ENCODE measurements at regions of chr2 and their contacts with region 1.

Region 1: DNA sequence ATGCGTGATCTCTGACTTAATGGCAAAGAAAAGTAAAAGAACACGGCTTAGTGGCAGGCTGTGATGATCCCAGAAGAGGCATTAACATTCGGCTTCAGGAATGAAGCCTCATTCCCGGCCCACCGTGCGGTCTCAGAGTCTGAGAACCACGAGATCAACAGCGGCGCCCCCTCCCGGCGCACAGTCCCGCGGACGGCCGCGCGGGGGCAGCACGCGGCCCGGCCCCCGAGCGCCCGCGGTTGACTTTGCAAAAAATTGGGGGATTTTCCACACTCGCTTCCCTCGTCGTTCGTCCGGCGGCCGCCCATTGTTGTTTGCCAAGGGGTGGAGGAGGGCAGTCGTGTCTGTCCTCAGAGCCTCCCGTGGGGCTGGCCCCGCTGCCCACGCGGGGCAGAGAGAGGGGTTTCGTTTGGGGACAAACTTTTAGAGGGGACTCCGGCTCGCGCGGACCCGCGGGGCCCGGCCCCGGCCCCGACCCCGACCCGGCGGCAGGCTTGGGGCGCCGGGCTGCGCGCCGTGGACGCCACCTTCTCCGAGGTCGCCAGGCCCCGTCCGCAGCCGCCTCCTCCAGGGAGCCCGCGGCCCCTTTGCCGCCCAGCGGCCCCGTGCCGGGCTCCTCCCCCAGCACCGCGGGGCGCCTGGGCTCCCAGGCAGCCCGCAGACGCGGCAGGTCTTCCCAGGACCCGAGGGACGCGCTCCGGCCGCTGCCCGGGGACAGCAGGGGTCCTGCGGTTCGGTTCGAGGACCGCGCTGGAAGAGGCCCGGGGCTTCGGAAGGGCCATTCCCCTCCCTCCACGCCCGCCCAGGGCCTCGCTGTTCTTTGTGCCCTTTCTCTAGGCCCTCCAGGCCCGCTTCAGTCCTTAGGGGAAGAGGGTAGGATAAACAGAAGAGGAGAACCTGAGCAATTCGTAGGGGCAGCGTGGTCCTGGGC is 3.4 kb upstream of the HS6ST1 start:
- DNase-seq: peak; percentile 54 to 91 (median 74)
- ATAC-seq: peak; percentile 65
- H3K4me3 ChIP-seq: peak overlapping the region; percentile 54
- H3K4me3 Mint-ChIP-seq: peak overlapping the region; percentile 87
- H3K27ac ChIP-seq: no peak overlapping the region
- H3K27ac Mint-ChIP-seq: peak overlapping the region; percentile 42
- H3K4me1 ChIP-seq: peaks cover 25% of the 10 kb centered on the region
- H3K4me1 Mint-ChIP-seq: peaks cover 22% of the 10 kb centered on the region
- H3K27me3 ChIP-seq: no peaks in the 10 kb centered on the region
- H3K27me3 Mint-ChIP-seq: no peaks in the 10 kb centered on the region
- CTCF ChIP-seq: peak; percentile 89

Region 2: GRCh38 chr2:126657636-126658318 is 1664.3 kb before region 1 on chr2:
- CTCF ChIA-PET with region 1: no interaction called
- POLR2A ChIA-PET with region 1: no interaction called
- intact Hi-C with region 1: loop called in 1 of 2 experiments (anchors 10 kb)
- DNase-seq: peak; percentile 50 to 90 (median 74)
- ATAC-seq: peak; percentile 59
- H3K4me3 ChIP-seq: peak overlapping the region; percentile 86
- H3K4me3 Mint-ChIP-seq: peak overlapping the region; percentile 100
- H3K27ac ChIP-seq: peak overlapping the region; percentile 80 to 81
- H3K27ac Mint-ChIP-seq: peak overlapping the region; percentile 98
- H3K4me1 ChIP-seq: peaks cover 66% of the 10 kb centered on the region
- H3K4me1 Mint-ChIP-seq: peaks cover 78% of the 10 kb centered on the region
- H3K27me3 ChIP-seq: no peaks in the 10 kb centered on the region
- H3K27me3 Mint-ChIP-seq: no peaks in the 10 kb centered on the region
- CTCF ChIP-seq: no peak

Region 3: DNA sequence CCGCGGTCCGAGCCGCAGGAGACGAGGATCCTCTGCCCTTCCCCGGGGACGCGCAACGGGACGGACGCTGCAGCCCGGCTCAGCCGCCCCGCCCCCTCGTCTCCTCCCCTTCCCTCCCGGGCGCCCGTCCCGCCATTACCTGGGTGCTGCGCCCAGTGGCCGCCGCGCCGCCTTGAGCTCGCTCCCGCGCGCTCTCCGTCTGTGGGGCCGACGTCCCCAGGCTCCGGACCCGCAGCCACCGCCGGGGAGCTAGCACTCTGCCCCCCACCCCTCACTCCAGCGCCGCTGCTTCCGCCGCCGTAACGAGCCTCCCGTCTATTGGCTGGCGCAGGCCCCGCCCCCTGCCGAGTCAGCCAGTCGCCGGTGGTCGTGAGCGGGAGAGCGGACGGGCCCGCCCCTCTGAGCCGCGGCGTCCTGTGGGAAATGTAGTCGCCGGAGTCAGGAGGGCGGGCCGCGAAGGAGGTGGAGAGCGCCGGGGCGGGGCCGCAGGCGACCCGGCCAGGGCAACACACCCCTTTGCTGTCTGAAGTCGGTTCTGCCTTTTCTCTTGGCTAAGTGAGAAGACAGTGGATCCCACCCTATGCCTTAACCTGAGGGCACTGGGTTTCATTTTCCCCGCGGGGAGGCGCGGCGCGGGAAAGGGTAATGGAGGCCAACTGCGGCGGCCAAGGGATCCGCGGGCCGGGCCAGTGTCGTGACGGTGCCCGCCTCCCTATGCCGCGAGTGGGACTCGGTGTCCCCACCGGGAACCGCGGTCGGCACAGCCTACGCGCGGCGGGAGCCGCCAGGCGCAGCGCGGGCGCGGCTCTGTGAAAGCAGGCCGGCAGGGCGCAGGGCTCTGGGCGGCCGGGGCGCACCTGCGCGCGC is 294.0 kb before region 1 on chr2 and contains the start of gene SAP130:
- CTCF ChIA-PET with region 1: no interaction called
- POLR2A ChIA-PET with region 1: no interaction called
- intact Hi-C with region 1: loop called in 1 of 2 experiments (anchors 5 kb)
- DNase-seq: peak; percentile 96 to 99 (median 98)
- ATAC-seq: peak; percentile 76
- H3K4me3 ChIP-seq: peak within 1 kb of the TSS; percentile 77
- H3K4me3 Mint-ChIP-seq: peak within 1 kb of the TSS; percentile 99
- H3K27ac ChIP-seq: peak within 1 kb of the TSS; percentile 85 to 89
- H3K27ac Mint-ChIP-seq: peak within 1 kb of the TSS; percentile 96
- H3K4me1 ChIP-seq: peaks cover 15% of the 10 kb centered on the region
- H3K4me1 Mint-ChIP-seq: peaks cover 30% of the 10 kb centered on the region
- H3K27me3 ChIP-seq: no peaks in the 10 kb centered on the region
- H3K27me3 Mint-ChIP-seq: no peaks in the 10 kb centered on the region
- CTCF ChIP-seq: no peak
- total RNA-seq, gene SAP130: 19.2 to 21.0 TPM

Region 4: GRCh38 chr2:128178650-128179460 is 143.2 kb before region 1 on chr2:
- CTCF ChIA-PET with region 1: no interaction called
- POLR2A ChIA-PET with region 1: no interaction called
- intact Hi-C with region 1: loop called (anchors 10 kb)
- DNase-seq: peak; percentile 7 to 75 (median 34)
- ATAC-seq: peak; percentile 86
- H3K4me3 ChIP-seq: no peak overlapping the region
- H3K4me3 Mint-ChIP-seq: no peak overlapping the region
- H3K27ac ChIP-seq: no peak overlapping the region
- H3K27ac Mint-ChIP-seq: no peak overlapping the region
- H3K4me1 ChIP-seq: no peaks in the 10 kb centered on the region
- H3K4me1 Mint-ChIP-seq: no peaks in the 10 kb centered on the region
- H3K27me3 ChIP-seq: no peaks in the 10 kb centered on the region
- H3K27me3 Mint-ChIP-seq: no peaks in the 10 kb centered on the region
- CTCF ChIP-seq: peak; percentile 64

Region 5: DNA sequence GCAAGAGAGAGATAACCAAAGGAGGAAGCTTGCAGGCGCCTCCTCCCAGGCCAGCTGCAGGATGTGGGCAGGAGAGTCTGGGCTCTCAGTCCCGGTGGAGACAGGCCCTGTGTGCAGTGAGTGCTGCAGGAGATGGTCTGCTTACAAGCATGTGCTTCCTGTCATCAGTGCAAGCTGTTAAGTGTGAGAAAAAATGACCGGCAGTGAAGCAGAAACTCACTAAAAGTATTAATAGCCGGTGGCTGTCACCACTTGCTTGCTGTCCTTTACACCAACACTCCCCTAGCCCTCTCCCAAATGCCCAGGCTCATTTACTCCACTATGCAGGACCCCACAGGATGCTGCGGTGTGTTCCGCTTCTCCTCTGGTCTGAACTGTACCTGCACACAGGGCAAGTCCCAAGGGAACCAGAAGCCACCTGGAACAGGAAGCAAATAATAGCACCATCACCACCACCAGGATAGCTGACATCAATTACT is 432.2 kb after region 1 on chr2:
- CTCF ChIA-PET with region 1: no interaction called
- POLR2A ChIA-PET with region 1: no interaction called
- intact Hi-C with region 1: loop called in 1 of 2 experiments (anchors 10 kb)
- DNase-seq: peak in 1 of 14 experiments; percentile 9
- ATAC-seq: peak; percentile 57
- H3K4me3 ChIP-seq: no peak overlapping the region
- H3K4me3 Mint-ChIP-seq: no peak overlapping the region
- H3K27ac ChIP-seq: no peak overlapping the region
- H3K27ac Mint-ChIP-seq: no peak overlapping the region
- H3K4me1 ChIP-seq: no peaks in the 10 kb centered on the region
- H3K4me1 Mint-ChIP-seq: peaks cover 20% of the 10 kb centered on the region
- H3K27me3 ChIP-seq: no peaks in the 10 kb centered on the region
- H3K27me3 Mint-ChIP-seq: no peaks in the 10 kb centered on the region
- CTCF ChIP-seq: no peak

Region 6: DNA sequence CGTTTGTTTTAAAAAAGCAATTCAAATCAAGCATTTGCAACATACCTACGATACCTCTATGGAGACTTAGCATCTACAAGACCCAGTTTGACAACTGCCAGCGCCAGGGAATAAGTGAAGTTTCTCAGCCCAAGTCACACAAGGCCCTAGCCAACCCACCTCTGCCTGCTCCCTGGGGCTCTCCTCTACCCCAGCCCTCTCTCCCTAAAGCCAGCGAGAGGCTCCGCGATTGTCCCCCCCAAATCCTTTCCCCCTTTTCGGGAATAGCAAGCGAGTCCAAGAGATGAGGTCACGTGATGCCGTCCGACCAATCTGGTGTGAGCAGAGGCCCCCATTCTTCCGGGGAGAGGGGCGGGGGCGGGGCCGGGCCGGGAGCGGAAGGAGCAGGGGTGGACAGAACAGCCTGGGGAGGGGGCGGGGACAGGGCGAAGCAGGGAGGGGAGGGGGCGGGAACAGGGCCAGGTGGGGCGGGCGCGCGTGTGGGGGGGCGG is 1555.3 kb after region 1 on chr2:
- CTCF ChIA-PET with region 1: no interaction called
- POLR2A ChIA-PET with region 1: no interaction called
- intact Hi-C with region 1: loop called in 1 of 2 experiments (anchors 5 kb)
- DNase-seq: peak; percentile 72 to 93 (median 82)
- ATAC-seq: peak; percentile 90
- H3K4me3 ChIP-seq: peak overlapping the region; percentile 81
- H3K4me3 Mint-ChIP-seq: peak overlapping the region; percentile 99
- H3K27ac ChIP-seq: peak overlapping the region in 1 of 2 donors; percentile 50
- H3K27ac Mint-ChIP-seq: peak overlapping the region; percentile 92
- H3K4me1 ChIP-seq: peaks cover 15% of the 10 kb centered on the region
- H3K4me1 Mint-ChIP-seq: peaks cover 11% of the 10 kb centered on the region
- H3K27me3 ChIP-seq: no peaks in the 10 kb centered on the region
- H3K27me3 Mint-ChIP-seq: no peaks in the 10 kb centered on the region
- CTCF ChIP-seq: no peak

Measured in CD4-positive, alpha-beta T cell (primary cell).